ENCODE measurements at regions of chr3 and their contacts with region 1.

Region 1: DNA sequence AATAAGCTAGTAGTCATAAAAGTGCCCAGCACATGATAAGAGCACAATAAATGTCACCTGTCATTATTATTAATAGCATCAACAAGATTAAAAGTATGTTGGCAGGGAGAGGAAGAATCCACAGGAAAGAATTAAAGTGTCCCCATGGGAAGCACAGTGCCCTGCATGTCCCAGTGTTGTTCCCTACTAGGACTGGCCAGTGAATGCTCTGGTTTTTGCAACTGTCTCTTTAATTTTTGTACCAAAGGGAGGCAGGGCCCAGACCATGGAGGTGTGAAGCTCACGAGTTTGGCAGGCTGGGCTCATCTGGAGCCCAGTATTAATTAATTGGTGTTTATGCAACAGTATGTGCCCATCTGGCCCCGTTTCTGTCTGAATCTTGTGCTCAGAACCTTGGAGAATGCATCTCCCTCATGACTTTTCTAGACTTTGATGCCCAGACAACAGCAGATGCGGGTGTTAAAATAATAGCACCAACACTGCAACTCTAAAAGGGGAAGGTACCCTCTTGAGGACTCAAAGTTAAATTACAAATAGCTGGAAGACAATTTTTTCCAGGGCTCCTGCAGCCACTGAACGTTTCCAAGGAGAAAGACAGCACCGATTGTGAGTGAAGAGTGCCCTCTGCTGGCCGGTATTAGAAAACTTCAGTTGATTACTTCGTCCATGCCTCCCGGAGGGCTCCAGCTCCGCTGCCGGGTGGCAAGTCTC is 71.9 kb upstream of the SPATA12 start:
- DNase-seq: peak; percentile 21 to 84 (median 76)
- ATAC-seq: peak; percentile 69
- H3K4me3 ChIP-seq: no peak overlapping the region
- H3K4me3 Mint-ChIP-seq: no peak overlapping the region
- H3K27ac ChIP-seq: no peak overlapping the region
- H3K27ac Mint-ChIP-seq: no peak overlapping the region
- H3K4me1 ChIP-seq: peaks cover 11% of the 10 kb centered on the region
- H3K4me1 Mint-ChIP-seq: peaks cover 11% of the 10 kb centered on the region
- H3K27me3 ChIP-seq: peaks cover 0 to 2% of the 10 kb centered on the region in 2 experiments
- H3K27me3 Mint-ChIP-seq: peaks cover 8% of the 10 kb centered on the region
- CTCF ChIP-seq: peak; percentile 90

Region 2: DNA sequence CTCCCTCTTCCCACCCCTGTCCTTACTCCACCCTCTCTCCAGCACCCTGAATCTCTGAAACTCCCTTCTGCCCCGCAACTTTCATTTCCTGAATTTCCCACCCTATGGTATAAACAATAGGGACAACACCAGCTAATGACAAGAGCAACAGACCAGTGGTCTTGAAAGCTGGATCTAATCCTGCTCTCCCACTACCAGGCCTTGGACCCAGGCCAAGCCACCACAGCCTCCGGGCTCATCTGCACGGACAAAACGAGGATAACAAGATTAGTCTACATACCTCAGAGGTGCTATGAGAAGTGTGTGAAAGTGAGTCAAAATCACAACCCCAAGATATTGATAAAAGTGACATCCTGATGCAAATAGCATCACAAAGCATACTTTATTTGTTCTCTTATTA is 648.9 kb before region 1 on chr3:
- CTCF ChIA-PET with region 1: interaction called, 8 read pairs
- POLR2A ChIA-PET with region 1: no interaction called
- intact Hi-C with region 1: loop called in 1 of 2 experiments (anchors 1 kb)
- DNase-seq: no peak
- ATAC-seq: no peak
- H3K4me3 ChIP-seq: no peak overlapping the region
- H3K4me3 Mint-ChIP-seq: no peak overlapping the region
- H3K27ac ChIP-seq: no peak overlapping the region
- H3K27ac Mint-ChIP-seq: no peak overlapping the region
- H3K4me1 ChIP-seq: no peaks in the 10 kb centered on the region
- H3K4me1 Mint-ChIP-seq: no peaks in the 10 kb centered on the region
- H3K27me3 ChIP-seq: no peaks in the 10 kb centered on the region
- H3K27me3 Mint-ChIP-seq: peaks cover 22% of the 10 kb centered on the region
- CTCF ChIP-seq: no peak

Region 3: GRCh38 chr3:56693750-56694149 is 294.9 kb before region 1 on chr3:
- CTCF ChIA-PET with region 1: interaction called, 263 read pairs
- POLR2A ChIA-PET with region 1: interaction called, 4 read pairs
- intact Hi-C with region 1: no loop called
- DNase-seq: peak in 1 of 9 experiments; percentile 38
- ATAC-seq: no peak
- H3K4me3 ChIP-seq: no peak overlapping the region
- H3K4me3 Mint-ChIP-seq: peak overlapping the region; percentile 80
- H3K27ac ChIP-seq: peak overlapping the region in 1 of 2 experiments; percentile 60
- H3K27ac Mint-ChIP-seq: peak overlapping the region; percentile 89
- H3K4me1 ChIP-seq: peaks cover 35% of the 10 kb centered on the region
- H3K4me1 Mint-ChIP-seq: peaks cover 46% of the 10 kb centered on the region
- H3K27me3 ChIP-seq: no peaks in the 10 kb centered on the region
- H3K27me3 Mint-ChIP-seq: no peaks in the 10 kb centered on the region
- CTCF ChIP-seq: no peak

Region 4: GRCh38 chr3:56753206-56753820 is 235.3 kb before region 1 on chr3:
- CTCF ChIA-PET with region 1: interaction called, 17 read pairs
- POLR2A ChIA-PET with region 1: interaction called, 4 read pairs
- intact Hi-C with region 1: no loop called
- DNase-seq: peak in 5 of 9 experiments; percentile 22 to 56 (median 45)
- ATAC-seq: peak; percentile 27
- H3K4me3 ChIP-seq: no peak overlapping the region
- H3K4me3 Mint-ChIP-seq: peak overlapping the region; percentile 47
- H3K27ac ChIP-seq: peak overlapping the region; percentile 62 to 79
- H3K27ac Mint-ChIP-seq: peak overlapping the region; percentile 100
- H3K4me1 ChIP-seq: peaks cover 52% of the 10 kb centered on the region
- H3K4me1 Mint-ChIP-seq: peaks cover 66% of the 10 kb centered on the region
- H3K27me3 ChIP-seq: no peaks in the 10 kb centered on the region
- H3K27me3 Mint-ChIP-seq: no peaks in the 10 kb centered on the region
- CTCF ChIP-seq: no peak

Region 5: GRCh38 chr3:56812754-56813650 is 175.6 kb before region 1 on chr3:
- CTCF ChIA-PET with region 1: interaction called, 24 read pairs
- POLR2A ChIA-PET with region 1: no interaction called
- intact Hi-C with region 1: no loop called
- DNase-seq: no peak
- ATAC-seq: no peak
- H3K4me3 ChIP-seq: no peak overlapping the region
- H3K4me3 Mint-ChIP-seq: peak overlapping the region; percentile 43
- H3K27ac ChIP-seq: peak overlapping the region in 1 of 2 experiments; percentile 65
- H3K27ac Mint-ChIP-seq: peak overlapping the region; percentile 53
- H3K4me1 ChIP-seq: peaks cover 39% of the 10 kb centered on the region
- H3K4me1 Mint-ChIP-seq: peaks cover 68% of the 10 kb centered on the region
- H3K27me3 ChIP-seq: no peaks in the 10 kb centered on the region
- H3K27me3 Mint-ChIP-seq: no peaks in the 10 kb centered on the region
- CTCF ChIP-seq: no peak

Region 6: DNA sequence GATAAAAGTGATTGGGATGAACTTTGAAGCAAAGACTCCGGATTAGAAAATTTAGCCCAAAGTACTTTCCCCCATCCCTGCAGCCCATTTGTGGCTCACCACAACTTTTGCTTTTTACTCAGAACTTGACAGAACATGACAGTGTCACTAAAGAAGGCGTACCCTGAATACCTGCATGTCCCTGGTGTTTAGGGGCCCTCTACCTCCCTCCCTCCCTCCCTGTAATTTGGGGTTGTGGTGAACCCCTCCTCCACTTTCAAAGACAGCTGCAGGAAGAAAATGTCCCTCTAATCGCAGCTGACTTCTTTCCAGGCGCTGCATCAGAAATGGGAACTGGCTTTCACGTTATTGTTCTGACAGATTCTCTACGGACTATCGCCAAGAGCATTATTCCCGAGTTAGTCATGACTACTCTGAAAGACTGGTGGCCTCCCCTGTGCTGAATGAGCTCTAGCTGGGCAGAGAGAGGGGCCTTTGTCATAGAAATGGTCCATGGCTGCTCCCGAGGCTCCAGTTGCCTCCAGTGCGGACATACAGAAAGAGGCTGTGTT is 93.7 kb before region 1 on chr3:
- CTCF ChIA-PET with region 1: interaction called, 10 read pairs
- POLR2A ChIA-PET with region 1: no interaction called
- intact Hi-C with region 1: no loop called
- DNase-seq: peak in 3 of 9 experiments; percentile 28 to 51 (median 31)
- ATAC-seq: peak; percentile 75
- H3K4me3 ChIP-seq: no peak overlapping the region
- H3K4me3 Mint-ChIP-seq: peak overlapping the region; percentile 62
- H3K27ac ChIP-seq: no peak overlapping the region
- H3K27ac Mint-ChIP-seq: peak overlapping the region; percentile 73
- H3K4me1 ChIP-seq: peaks cover 40% of the 10 kb centered on the region
- H3K4me1 Mint-ChIP-seq: peaks cover 73% of the 10 kb centered on the region
- H3K27me3 ChIP-seq: no peaks in the 10 kb centered on the region
- H3K27me3 Mint-ChIP-seq: no peaks in the 10 kb centered on the region
- CTCF ChIP-seq: no peak

Region 7: GRCh38 chr3:56923521-56924224 is 64.9 kb before region 1 on chr3:
- CTCF ChIA-PET with region 1: interaction called, 58 read pairs
- POLR2A ChIA-PET with region 1: no interaction called
- intact Hi-C with region 1: no loop called
- DNase-seq: peak in 8 of 9 experiments; percentile 27 to 89 (median 60)
- ATAC-seq: peak; percentile 80
- H3K4me3 ChIP-seq: peak overlapping the region in 1 of 2 experiments; percentile 11
- H3K4me3 Mint-ChIP-seq: peak overlapping the region; percentile 55
- H3K27ac ChIP-seq: peak overlapping the region; percentile 55 to 89
- H3K27ac Mint-ChIP-seq: peak overlapping the region; percentile 91
- H3K4me1 ChIP-seq: peaks cover 86% of the 10 kb centered on the region
- H3K4me1 Mint-ChIP-seq: peaks cover 81% of the 10 kb centered on the region
- H3K27me3 ChIP-seq: no peaks in the 10 kb centered on the region
- H3K27me3 Mint-ChIP-seq: no peaks in the 10 kb centered on the region
- CTCF ChIP-seq: no peak

Region 8: DNA sequence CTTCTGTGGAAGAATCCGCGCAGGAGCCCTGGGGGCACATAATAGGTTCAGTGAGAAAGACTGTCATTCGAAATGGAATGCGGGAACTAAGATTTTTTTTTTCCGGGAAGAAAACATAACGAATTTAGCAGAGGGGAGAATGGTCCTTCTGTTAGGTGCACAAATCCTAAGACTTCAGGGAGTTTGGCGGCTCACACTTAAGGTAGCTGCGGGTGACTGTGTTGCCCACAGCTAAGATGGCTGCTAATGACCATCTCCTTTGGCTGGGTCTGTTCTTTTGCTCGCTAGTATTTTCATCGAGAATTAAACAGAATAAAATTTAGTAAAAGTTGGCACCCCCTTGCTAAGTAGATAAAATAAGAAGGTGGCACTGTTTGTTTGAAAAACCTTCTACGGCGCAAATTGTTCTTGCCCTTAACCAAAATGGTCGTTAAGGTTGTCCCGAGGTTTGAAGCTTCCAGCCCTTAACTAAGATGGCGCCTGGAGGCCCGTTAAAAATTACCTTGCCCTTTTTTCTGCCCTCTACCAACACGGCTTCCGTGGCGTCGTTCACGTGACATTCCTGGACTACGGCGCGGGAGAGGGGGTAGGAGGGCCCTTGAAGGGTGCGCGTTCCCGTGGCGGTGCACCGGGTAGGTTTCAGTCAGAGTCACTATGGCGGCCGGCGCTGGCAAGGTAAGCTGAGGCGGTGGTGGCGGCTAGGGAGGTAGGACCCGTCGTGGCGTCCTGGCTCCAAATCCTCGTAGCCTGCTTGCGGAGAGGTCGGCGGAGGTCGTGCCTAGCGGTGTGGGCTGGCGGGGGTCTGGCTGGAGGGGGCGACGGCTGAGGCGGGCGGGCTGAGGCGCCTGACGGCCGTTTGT is 767.3 kb after region 1 on chr3 and contains the start of gene SLMAP:
- CTCF ChIA-PET with region 1: no interaction called
- POLR2A ChIA-PET with region 1: no interaction called
- intact Hi-C with region 1: no loop called
- DNase-seq: peak; percentile 93 to 98 (median 96)
- ATAC-seq: peak; percentile 92
- H3K4me3 ChIP-seq: peak within 1 kb of the TSS; percentile 69 to 80
- H3K4me3 Mint-ChIP-seq: peak within 1 kb of the TSS; percentile 97
- H3K27ac ChIP-seq: peak within 1 kb of the TSS; percentile 45 to 79
- H3K27ac Mint-ChIP-seq: peak within 1 kb of the TSS; percentile 95
- H3K4me1 ChIP-seq: peaks cover 34% of the 10 kb centered on the region
- H3K4me1 Mint-ChIP-seq: peaks cover 44% of the 10 kb centered on the region
- H3K27me3 ChIP-seq: no peaks in the 10 kb centered on the region
- H3K27me3 Mint-ChIP-seq: no peaks in the 10 kb centered on the region
- CTCF ChIP-seq: no peak
- total RNA-seq, gene SLMAP: 55.0 to 56.7 TPM